H1 (cell line): ENCODE measurements at regions of chr1 and their contacts with region 1.

Region 1: GRCh38 chr1:212269306-212269705 is 15.9 kb upstream of the PPP2R5A start:
- DNase-seq: no peak
- H3K4me3 ChIP-seq: no peak overlapping the region
- H3K27ac ChIP-seq: no peak overlapping the region
- H3K4me1 ChIP-seq: no peaks in the 10 kb centered on the region
- H3K27me3 ChIP-seq: peaks cover 0 to 1% (median 0%) of the 10 kb centered on the region in 4 experiments; a peak in 1 of 7 replicates
- CTCF ChIP-seq: no peak
- EP300 ChIP-seq: no peak
- POLR2A ChIP-seq: no peak
- RAD21 ChIP-seq: peak in 1 of 2 experiments; percentile 10; a peak in 1 of 4 replicates

Region 2: GRCh38 chr1:212232090-212232489 is 37.2 kb before region 1 on chr1:
- CTCF ChIA-PET with region 1: no interaction called
- POLR2A ChIA-PET with region 1: no interaction called
- DNase-seq: no peak
- H3K4me3 ChIP-seq: no peak overlapping the region
- H3K27ac ChIP-seq: no peak overlapping the region
- H3K4me1 ChIP-seq: no peaks in the 10 kb centered on the region
- H3K27me3 ChIP-seq: no peaks in the 10 kb centered on the region
- CTCF ChIP-seq: no peak
- EP300 ChIP-seq: no peak
- POLR2A ChIP-seq: no peak
- RAD21 ChIP-seq: no peak

Region 3: DNA sequence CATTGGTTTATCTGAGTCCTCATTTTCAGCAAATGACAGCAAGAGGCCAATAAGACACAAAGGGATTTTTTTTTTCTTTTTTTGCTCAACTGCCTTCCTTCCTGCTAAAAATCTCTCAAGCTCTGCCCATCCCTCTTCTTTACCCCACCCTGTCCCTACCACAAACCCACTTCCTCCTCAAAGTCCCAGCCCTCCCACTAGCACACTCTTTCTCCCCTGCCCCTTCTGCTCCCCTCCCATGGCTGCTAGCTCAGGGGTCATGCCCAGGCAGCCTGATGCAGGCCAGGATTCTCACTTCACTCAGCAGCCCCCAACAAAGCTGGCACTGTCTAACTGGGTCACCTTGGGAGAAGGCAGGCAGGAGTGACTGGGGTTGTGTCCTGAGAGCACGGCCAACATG is 12.9 kb before region 1 on chr1:
- CTCF ChIA-PET with region 1: interaction called, 22 read pairs
- POLR2A ChIA-PET with region 1: interaction called, 3 read pairs
- DNase-seq: no peak
- H3K4me3 ChIP-seq: no peak overlapping the region
- H3K27ac ChIP-seq: no peak overlapping the region
- H3K4me1 ChIP-seq: peaks cover 0 to 5% (median 1%) of the 10 kb centered on the region in 4 experiments; a peak in 3 of 7 replicates
- H3K27me3 ChIP-seq: no peaks in the 10 kb centered on the region
- CTCF ChIP-seq: no peak
- EP300 ChIP-seq: no peak
- POLR2A ChIP-seq: no peak
- RAD21 ChIP-seq: no peak

Region 4: DNA sequence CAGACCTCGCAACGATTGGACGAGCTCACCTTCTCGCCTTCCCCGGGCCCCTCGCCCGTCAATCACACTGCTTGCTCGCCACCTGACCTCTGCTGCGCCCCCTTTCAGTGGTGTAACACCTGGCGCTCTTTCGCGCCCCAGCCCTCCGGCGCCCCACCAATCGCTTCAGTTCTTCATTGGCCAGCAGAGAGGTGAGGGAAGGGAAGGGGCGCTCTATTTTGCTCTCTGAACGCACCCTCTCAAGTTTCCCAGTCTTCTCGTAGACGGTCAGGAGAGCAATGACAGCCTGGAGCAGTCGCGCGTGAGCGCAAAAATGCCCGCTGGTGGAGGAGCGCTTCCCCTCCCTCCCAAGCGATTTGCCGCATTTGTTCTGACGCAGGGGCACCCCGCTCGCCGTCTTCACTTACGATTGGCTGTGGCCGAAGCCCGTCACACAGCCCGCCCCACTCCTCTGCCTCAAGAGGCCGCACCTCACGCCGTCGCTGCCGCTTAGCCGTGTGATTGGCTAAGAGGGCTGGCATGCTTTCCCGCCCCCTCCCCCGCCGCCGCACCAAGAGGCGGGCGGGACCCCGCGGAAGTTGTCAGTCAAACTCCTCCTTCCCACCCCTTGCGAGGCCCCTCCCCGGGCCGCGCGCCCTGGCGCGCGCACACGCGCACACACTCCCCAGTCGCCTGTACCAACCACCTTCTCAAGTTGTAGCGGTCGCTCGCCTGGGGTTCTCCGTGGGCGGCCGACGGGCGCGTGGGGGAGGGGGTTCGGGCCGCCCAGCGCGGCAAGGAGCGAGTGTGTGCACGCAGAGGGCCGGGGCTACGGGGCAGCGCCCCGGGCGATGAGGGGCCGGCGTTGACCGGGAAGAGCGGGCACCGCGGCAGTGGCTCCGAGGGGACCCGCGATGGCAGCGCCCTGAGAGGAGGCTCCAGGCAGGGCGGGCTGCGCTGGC is 15.7 kb after region 1 on chr1 and contains the start of gene PPP2R5A:
- CTCF ChIA-PET with region 1: interaction called, 16 read pairs
- POLR2A ChIA-PET with region 1: interaction called, 8 read pairs
- DNase-seq: peak; percentile 93 to 98
- H3K4me3 ChIP-seq: peak within 1 kb of the TSS; percentile 85 to 92 (median 88)
- H3K27ac ChIP-seq: peak within 1 kb of the TSS; percentile 83
- H3K4me1 ChIP-seq: peaks cover 3 to 8% (median 6%) of the 10 kb centered on the region in 4 experiments; a peak in 5 of 7 replicates
- H3K27me3 ChIP-seq: no peaks in the 10 kb centered on the region
- CTCF ChIP-seq: peak; percentile 31 to 55 (median 48)
- EP300 ChIP-seq: peak in 1 of 2 experiments; percentile 26; a peak in 1 of 3 replicates
- POLR2A ChIP-seq: peak; percentile 10 to 91
- RAD21 ChIP-seq: peak in 1 of 2 experiments; percentile 12; a peak in 2 of 4 replicates
- total RNA-seq, gene PPP2R5A: 36.3 and 36.8 TPM in 2 replicates

Region 5: DNA sequence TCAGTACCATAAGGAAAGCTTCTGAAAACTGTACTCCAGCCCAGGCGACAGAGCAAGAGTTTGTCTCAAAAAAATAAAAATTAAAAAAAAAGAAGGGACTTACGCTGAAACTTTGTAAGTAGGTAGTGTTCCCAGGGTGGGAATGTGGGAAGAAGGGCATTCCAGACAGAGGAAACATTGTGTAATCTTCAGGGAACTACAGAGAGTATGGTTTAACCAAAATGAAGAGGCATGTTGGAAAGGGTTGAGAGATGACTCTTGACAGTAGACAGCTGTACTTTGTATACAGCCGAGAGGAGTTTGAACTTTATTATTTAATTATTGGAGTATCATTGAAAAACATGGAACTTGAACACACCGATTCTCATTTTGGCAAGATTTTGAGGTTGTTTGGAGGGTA is 58.9 kb after region 1 on chr1:
- CTCF ChIA-PET with region 1: no interaction called
- POLR2A ChIA-PET with region 1: no interaction called
- DNase-seq: no peak
- H3K4me3 ChIP-seq: no peak overlapping the region
- H3K27ac ChIP-seq: no peak overlapping the region
- H3K4me1 ChIP-seq: no peaks in the 10 kb centered on the region
- H3K27me3 ChIP-seq: no peaks in the 10 kb centered on the region
- CTCF ChIP-seq: no peak
- EP300 ChIP-seq: no peak
- POLR2A ChIP-seq: no peak
- RAD21 ChIP-seq: no peak

Region 6: DNA sequence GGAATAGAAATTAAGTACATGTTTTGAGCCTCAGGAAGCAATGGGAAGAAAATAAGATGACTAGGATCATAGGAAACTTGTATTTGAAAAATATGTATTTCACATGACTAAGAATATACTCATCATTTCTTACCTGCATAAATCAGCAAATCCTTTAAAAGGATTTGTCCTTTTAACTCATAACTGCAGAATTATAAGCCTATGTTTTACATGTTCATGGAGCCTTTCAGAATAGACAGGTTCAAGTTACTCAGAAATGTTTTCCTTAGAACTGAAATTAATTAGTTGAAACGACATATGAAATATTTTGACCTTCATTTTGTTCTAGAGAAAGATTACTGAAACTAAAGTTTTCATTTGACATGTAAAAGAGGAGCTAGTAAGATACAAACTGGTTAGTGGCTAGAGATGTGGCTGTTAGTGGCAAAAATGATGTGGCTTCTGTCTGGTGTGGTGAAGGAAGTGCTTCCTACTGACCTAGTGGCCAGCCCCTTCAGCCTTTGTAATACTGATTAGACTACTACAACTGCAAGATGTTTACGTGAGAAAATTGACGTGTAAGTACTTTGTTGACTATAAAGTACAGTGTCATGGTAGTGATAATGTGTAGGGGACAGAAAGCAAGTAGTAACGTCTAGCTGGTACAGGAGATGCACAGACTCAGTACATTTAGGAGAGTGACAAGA is 90.6 kb after region 1 on chr1:
- CTCF ChIA-PET with region 1: no interaction called
- POLR2A ChIA-PET with region 1: no interaction called
- DNase-seq: no peak
- H3K4me3 ChIP-seq: no peak overlapping the region
- H3K27ac ChIP-seq: no peak overlapping the region
- H3K4me1 ChIP-seq: no peaks in the 10 kb centered on the region
- H3K27me3 ChIP-seq: no peaks in the 10 kb centered on the region
- CTCF ChIP-seq: no peak
- EP300 ChIP-seq: no peak
- POLR2A ChIP-seq: no peak
- RAD21 ChIP-seq: no peak